ENCODE measurements at regions of chr10 and their contacts with region 1.

Region 1: DNA sequence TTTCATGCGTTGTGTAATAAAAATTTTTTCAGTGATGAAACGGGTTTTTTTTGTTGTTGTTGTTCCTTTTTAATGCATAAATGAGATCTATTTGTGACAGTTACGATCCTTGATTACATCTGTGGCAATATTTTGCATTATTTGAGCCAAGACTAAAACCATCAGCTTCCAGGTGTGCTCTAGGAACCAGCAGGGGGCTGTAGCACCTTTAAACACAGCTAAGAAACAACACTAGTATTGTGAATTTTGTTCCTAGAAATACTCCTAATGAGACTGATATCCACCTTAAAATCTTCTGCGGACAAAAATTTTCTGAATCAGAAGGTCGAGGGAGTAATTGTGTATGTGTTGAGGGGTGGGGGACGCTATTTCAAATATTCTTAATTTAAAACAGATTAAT is 52.6 kb downstream of the FGFBP3 start:
- DNase-seq: peak; percentile 8
- ATAC-seq: no peak
- H3K4me3 ChIP-seq: no peak overlapping the region
- H3K27ac ChIP-seq: no peak overlapping the region
- H3K4me1 ChIP-seq: no peaks in the 10 kb centered on the region
- H3K27me3 ChIP-seq: no peaks in the 10 kb centered on the region
- CTCF ChIP-seq: peak; percentile 69; the same call in 1 of the 2 replicates

Region 2: GRCh38 chr10:91843083-91843482 is 13.6 kb before region 1 on chr10:
- CTCF ChIA-PET with region 1: no interaction called
- POLR2A ChIA-PET with region 1: no interaction called
- in situ Hi-C with region 1: no loop called
- intact Hi-C with region 1: no loop called
- DNase-seq: no peak
- ATAC-seq: no peak
- H3K4me3 ChIP-seq: no peak overlapping the region
- H3K27ac ChIP-seq: no peak overlapping the region
- H3K4me1 ChIP-seq: no peaks in the 10 kb centered on the region
- H3K27me3 ChIP-seq: no peaks in the 10 kb centered on the region
- CTCF ChIP-seq: no peak

Region 3: GRCh38 chr10:91901784-91902677 is 45.4 kb after region 1 on chr10:
- CTCF ChIA-PET with region 1: no interaction called
- POLR2A ChIA-PET with region 1: interaction called, 12 read pairs
- in situ Hi-C with region 1: no loop called
- intact Hi-C with region 1: no loop called
- DNase-seq: peak; percentile 93
- ATAC-seq: peak; percentile 97
- H3K4me3 ChIP-seq: no peak overlapping the region; a peak in 1 of 4 replicates
- H3K27ac ChIP-seq: peak overlapping the region; percentile 57
- H3K4me1 ChIP-seq: peaks cover 15% of the 10 kb centered on the region
- H3K27me3 ChIP-seq: no peaks in the 10 kb centered on the region
- CTCF ChIP-seq: no peak

Region 4: GRCh38 chr10:92150823-92151222 is 294.2 kb after region 1 on chr10:
- CTCF ChIA-PET with region 1: no interaction called
- POLR2A ChIA-PET with region 1: no interaction called
- in situ Hi-C with region 1: no loop called
- intact Hi-C with region 1: no loop called
- DNase-seq: no peak
- ATAC-seq: no peak
- H3K4me3 ChIP-seq: no peak overlapping the region
- H3K27ac ChIP-seq: no peak overlapping the region
- H3K4me1 ChIP-seq: no peaks in the 10 kb centered on the region
- H3K27me3 ChIP-seq: no peaks in the 10 kb centered on the region
- CTCF ChIP-seq: no peak

Measured in Panc1 (cell line).